Transverse colon (tissue), 4 donors: ENCODE measurements at regions of chr7 and their contacts with region 1.

Region 1: DNA sequence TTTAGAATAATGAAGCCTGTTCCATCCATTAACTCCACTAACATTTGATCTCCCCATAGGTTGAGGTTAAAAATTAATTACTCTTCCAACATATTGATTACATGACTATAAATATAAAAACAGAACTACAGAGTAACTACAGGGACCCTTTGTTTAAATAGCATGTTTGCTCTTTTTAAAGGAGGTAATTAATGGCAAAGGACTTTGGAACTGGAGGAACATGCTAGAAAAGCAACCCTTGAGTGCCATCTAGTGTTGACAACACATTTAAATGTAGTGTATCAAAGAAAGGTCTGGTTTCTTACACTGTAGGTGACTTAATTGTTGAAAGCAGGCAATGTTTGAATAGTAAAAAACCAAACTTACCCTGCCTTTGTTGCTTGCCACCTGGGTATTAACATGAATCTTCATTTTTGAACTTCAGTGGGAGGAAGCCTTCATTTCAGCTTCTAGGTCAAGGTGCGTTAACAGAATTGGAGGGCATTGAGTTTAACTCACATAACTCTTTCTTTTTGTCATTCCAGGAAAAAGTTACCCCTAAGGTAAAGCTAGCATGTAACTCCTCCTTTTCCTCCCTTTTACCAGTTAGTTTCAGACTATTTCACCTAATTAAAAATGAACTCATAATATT is 52.6 kb upstream of the CAPZA2 start:
- DNase-seq: no peak
- H3K4me3 ChIP-seq: no peak overlapping the region
- H3K27ac ChIP-seq: peak overlapping the region; percentile 54 to 79 (median 69)
- H3K4me1 ChIP-seq: peaks cover 7 to 59% (median 39%) of the 10 kb centered on the region in 4 donors
- H3K27me3 ChIP-seq: no peaks in the 10 kb centered on the region
- CTCF ChIP-seq: peak; percentile 60 to 77 (median 66)
- EP300 ChIP-seq: no peak
- POLR2A ChIP-seq: no peak

Region 2: GRCh38 chr7:116111475-116111874 is 698.3 kb before region 1 on chr7:
- in situ Hi-C with region 1: no loop called
- intact Hi-C with region 1: no loop called
- DNase-seq: no peak
- H3K4me3 ChIP-seq: no peak overlapping the region
- H3K27ac ChIP-seq: no peak overlapping the region
- H3K4me1 ChIP-seq: no peaks in the 10 kb centered on the region
- H3K27me3 ChIP-seq: no peaks in the 10 kb centered on the region
- CTCF ChIP-seq: no peak
- EP300 ChIP-seq: no peak
- POLR2A ChIP-seq: no peak

Region 3: DNA sequence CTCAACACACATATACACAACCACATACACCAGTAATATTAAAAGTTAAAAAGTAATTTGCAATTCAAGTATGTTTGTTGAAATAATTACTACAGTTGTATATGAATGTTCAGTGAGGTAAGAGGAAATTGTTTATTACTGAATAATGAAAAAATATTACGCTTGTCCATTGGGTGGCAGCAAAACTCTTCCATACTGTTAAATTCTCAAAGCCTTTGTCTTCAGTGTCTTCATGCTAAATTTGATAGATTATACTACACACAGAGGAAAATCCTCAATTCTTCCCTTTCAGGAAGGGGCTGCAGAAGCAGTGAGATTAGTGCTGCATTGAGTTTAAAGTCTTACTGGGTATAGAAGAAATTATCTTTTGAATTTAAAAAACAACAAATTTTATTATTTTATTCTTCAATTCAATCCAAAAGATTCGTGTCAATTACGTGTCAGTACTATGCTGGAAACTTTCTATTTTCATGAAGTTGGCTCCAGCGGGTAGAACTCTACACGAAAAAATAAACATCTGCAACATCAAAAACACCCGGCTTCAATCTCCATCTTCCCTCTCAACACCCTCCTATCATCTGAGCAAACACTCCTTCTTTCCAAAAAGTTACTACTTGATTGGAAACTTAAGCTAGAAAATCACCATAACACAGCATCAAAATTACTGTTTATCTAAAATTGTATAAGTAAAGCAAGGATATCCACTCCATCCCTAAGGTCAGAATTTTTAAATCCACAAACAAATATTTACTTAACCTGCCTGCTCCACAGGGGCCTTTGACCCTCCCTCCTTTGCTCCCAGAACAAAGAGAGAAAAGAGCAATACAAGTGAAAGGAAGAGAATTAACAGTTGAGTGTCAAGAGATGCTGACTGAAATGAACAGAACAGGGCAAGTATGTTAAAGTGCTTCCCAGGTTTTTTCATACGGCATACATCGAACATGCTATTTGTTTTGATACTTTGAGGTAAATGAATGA is 636.4 kb before region 1 on chr7:
- in situ Hi-C with region 1: loop called (anchors 10 to 25 kb)
- intact Hi-C with region 1: loop called (anchors 5 kb)
- DNase-seq: no peak
- H3K4me3 ChIP-seq: no peak overlapping the region
- H3K27ac ChIP-seq: no peak overlapping the region
- H3K4me1 ChIP-seq: peaks cover 0 to 15% (median 6%) of the 10 kb centered on the region in 4 donors
- H3K27me3 ChIP-seq: no peaks in the 10 kb centered on the region
- CTCF ChIP-seq: peak; percentile 43 to 71 (median 51)
- EP300 ChIP-seq: no peak
- POLR2A ChIP-seq: no peak

Region 4: DNA sequence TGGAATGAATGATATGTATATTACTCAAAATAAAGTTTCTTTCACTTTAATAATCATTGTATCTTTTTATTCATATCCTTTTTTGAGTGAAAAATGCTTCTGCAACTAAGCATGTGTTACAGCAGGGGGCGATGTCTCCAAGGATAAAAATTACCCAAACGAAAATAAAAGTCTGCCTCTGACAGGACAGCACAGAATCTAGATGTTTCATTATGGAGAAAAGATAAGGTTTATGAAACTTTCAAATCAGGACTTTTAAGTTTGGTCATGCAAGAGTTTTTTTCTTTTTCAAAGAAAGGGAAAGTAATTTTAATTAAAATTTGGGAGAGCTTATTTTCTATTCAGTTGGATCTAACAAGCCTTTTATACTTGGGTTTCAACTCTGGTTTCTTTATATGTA is 551.0 kb before region 1 on chr7:
- in situ Hi-C with region 1: loop called (anchors 10 to 25 kb)
- intact Hi-C with region 1: no loop called
- DNase-seq: no peak
- H3K4me3 ChIP-seq: no peak overlapping the region
- H3K27ac ChIP-seq: peak overlapping the region in 3 of 4 donors; percentile 11 to 50 (median 19)
- H3K4me1 ChIP-seq: peaks cover 0 to 8% (median 4%) of the 10 kb centered on the region in 4 donors
- H3K27me3 ChIP-seq: no peaks in the 10 kb centered on the region
- CTCF ChIP-seq: peak; percentile 76 to 91 (median 82)
- EP300 ChIP-seq: no peak
- POLR2A ChIP-seq: no peak

Region 5: GRCh38 chr7:116588641-116589594 is 220.8 kb before region 1 on chr7:
- in situ Hi-C with region 1: loop called in 1 of 4 experiments (anchors 10 kb)
- intact Hi-C with region 1: loop called (anchors 1 kb)
- DNase-seq: no peak
- H3K4me3 ChIP-seq: no peak overlapping the region
- H3K27ac ChIP-seq: peak overlapping the region in 2 of 4 donors; percentile 8 to 23
- H3K4me1 ChIP-seq: peaks cover 13 to 42% (median 22%) of the 10 kb centered on the region in 4 donors
- H3K27me3 ChIP-seq: no peaks in the 10 kb centered on the region
- CTCF ChIP-seq: peak; percentile 69 to 81 (median 74)
- EP300 ChIP-seq: no peak
- POLR2A ChIP-seq: no peak

Region 6: GRCh38 chr7:116598278-116598677 is 211.5 kb before region 1 on chr7:
- in situ Hi-C with region 1: loop called (anchors 5 to 10 kb)
- intact Hi-C with region 1: no loop called
- DNase-seq: no peak
- H3K4me3 ChIP-seq: no peak overlapping the region
- H3K27ac ChIP-seq: no peak overlapping the region
- H3K4me1 ChIP-seq: peaks cover 0 to 15% (median 2%) of the 10 kb centered on the region in 4 donors
- H3K27me3 ChIP-seq: no peaks in the 10 kb centered on the region
- CTCF ChIP-seq: no peak
- EP300 ChIP-seq: no peak
- POLR2A ChIP-seq: no peak

Region 7: GRCh38 chr7:116665332-116665996 is 144.3 kb before region 1 on chr7:
- in situ Hi-C with region 1: loop called in 2 of 4 experiments (anchors 10 kb)
- intact Hi-C with region 1: no loop called
- DNase-seq: no peak
- H3K4me3 ChIP-seq: no peak overlapping the region
- H3K27ac ChIP-seq: no peak overlapping the region
- H3K4me1 ChIP-seq: peaks cover 0 to under 1% (median 0%) of the 10 kb centered on the region in 4 donors
- H3K27me3 ChIP-seq: no peaks in the 10 kb centered on the region
- CTCF ChIP-seq: no peak
- EP300 ChIP-seq: no peak
- POLR2A ChIP-seq: no peak

Region 8: DNA sequence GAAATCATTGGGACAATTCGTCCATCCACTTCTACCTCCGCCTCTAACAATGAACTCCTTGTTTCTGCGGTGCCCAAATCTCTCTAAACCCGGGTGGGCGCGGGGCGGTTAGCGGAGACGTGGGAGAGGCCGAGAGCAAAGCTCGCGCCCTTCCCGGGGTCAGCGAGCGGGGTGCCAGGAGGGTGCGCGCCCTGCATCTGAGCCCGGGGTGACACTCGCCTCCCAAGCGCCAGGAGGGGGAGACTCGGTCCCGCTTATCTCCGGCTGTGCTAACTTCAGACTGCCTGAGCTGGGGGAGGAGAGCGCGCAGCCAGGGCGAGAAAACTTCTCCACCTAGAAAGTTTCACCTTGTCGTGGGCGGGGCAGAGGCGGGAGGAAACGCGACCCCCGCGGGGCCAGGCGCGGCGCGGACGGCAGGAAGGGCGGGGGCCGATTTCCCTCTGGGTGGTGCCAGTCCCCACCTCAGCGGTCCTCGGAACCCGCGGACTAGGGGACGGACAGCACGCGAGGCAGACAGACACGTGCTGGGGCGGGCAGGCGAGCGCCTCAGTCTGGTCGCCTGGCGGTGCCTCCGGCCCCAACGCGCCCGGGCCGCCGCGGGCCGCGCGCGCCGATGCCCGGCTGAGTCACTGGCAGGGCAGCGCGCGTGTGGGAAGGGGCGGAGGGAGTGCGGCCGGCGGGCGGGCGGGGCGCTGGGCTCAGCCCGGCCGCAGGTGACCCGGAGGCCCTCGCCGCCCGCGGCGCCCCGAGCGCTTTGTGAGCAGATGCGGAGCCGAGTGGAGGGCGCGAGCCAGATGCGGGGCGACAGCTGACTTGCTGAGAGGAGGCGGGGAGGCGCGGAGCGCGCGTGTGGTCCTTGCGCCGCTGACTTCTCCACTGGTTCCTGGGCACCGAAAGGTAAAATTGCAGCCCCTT is 137.8 kb before region 1 on chr7 and contains the start of gene MET:
- in situ Hi-C with region 1: loop called in 2 of 4 experiments (anchors 10 kb)
- intact Hi-C with region 1: loop called (anchors 1 kb)
- DNase-seq: peak; percentile 86
- H3K4me3 ChIP-seq: peak within 1 kb of the TSS; percentile 51 to 75 (median 62)
- H3K27ac ChIP-seq: peak within 1 kb of the TSS; percentile 79 to 92 (median 85)
- H3K4me1 ChIP-seq: peaks cover 0 to 15% (median 8%) of the 10 kb centered on the region in 4 donors
- H3K27me3 ChIP-seq: peaks cover 2% of the 10 kb centered on the region
- CTCF ChIP-seq: peak; percentile 47 to 88 (median 59)
- EP300 ChIP-seq: no peak
- POLR2A ChIP-seq: no peak
- total RNA-seq, gene MET: 6.4 to 35.5 (median 20.3) TPM